GM18951 (cell line): ENCODE measurements at regions of chr5 and their contacts with region 1.

Region 1: DNA sequence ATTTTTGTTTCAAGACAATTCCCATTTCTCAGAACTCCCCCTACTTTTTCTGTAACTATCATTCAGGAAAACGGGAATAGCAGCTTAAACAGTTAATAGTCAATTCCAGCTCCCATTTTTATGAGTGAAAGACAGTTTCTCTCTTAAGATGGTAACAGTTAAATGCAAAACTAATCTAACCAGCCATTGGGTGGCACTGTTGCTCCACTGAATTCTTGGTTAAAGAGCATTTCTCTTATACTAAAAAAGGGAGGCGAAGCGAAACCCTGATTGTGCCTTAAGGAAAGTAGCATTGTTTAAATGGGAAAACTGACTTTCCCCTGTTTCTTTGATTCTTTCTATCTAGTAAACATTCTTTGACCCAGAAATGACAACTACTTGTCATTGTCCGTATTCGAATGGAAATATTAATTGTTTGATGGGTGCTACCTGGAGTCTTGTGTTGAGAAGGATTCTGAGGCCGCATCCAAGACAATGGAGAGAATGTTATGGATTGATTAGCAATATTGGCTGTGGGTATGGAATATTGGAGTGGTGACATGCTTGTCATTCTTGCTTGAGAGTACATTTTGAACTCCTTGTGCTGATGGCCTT is 507.8 kb downstream of the MAT2B start:
- POLR2A ChIP-seq: no peak

Region 2: GRCh38 chr5:164504141-164504772 is 491.1 kb after region 1 on chr5:
- in situ Hi-C with region 1: loop called (anchors 25 kb)
- POLR2A ChIP-seq: no peak

Region 3: DNA sequence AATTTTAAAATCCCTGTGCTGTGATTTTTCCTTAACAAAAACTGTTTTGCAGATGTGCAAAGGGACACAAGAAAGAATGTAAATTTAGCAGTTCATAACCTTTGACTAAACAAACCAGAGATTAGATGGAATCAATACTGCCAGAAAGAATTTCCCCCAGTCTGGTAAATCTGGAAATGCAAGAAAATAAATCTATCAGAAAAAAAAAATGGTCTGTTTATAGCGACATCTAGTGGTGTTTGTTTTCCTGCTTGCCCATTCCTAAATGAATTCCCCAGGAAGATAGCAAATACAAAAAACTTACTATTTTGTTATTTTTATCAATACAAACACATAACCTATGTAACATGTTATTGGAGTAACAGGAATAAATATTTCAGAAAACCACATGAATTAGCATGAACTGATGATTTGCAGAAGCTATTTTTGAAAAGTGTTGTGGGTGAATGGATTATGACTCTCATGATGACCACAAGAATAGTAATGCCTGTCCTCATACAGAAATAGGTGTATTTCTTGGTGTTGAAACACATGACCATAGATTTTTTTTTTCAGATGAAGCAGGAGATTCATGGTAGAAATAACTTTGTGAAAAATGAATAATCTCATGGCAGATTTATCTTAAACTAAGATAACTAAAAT is 1196.0 kb after region 1 on chr5:
- in situ Hi-C with region 1: loop called (anchors 25 kb)
- POLR2A ChIP-seq: no peak